Calu3 (cell line): ENCODE measurements at regions of chr1 and their contacts with region 1.

Region 1: DNA sequence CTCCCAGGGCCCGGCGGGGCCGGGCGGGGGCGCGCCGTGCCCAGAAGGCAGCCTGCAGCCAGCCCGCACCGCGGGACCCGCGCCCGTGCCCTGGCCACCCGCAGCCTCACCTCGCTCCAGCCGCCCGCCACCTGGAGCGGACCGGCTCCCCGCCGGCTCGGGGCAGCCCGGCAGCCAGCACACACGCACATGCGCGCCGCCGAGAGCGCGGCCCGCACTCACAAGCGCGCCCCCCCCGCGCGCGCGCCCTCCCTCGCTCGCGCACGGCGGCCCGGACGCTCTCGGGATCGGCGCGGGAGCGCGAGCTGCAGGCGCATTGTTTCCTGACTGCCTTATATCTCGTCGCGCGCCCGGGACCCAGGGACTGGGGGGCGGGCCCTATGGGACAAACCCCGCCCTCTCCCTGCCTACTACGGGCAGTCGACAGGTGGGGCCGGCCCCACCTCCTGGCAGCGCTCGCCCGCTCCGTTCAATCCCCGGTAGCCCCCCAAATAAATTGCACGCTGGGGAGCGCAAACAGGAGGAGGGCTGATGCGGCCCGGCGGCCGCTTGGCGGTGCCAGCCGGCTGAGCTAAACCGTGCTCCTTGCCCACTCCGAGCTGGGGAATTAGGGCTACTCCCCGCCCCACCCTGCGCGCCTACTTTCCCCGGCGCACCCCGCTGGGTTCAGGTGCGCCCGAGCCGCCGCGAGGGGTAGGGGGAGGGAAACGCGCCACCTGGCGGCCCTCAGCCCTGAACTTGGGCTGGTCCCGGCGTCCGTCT is at the start of gene MYCL:
- DNase-seq: peak; percentile 94
- H3K4me3 Mint-ChIP-seq: peak within 1 kb of the TSS; percentile 86
- H3K27ac Mint-ChIP-seq: no peak within 1 kb of the TSS
- H3K4me1 Mint-ChIP-seq: peaks cover 12% of the 10 kb centered on the region
- H3K27me3 Mint-ChIP-seq: peaks cover 56% of the 10 kb centered on the region
- CTCF ChIP-seq: peak; percentile 69
- total RNA-seq, gene MYCL: 0.59 and 0.78 TPM in 2 replicates

Region 2: GRCh38 chr1:39845275-39846116 is 56.4 kb before region 1 on chr1:
- CTCF ChIA-PET with region 1: interaction called, 10 read pairs
- intact Hi-C with region 1: loop called (anchors 5 kb)
- DNase-seq: peak; percentile 89
- H3K4me3 Mint-ChIP-seq: peak overlapping the region; percentile 9
- H3K27ac Mint-ChIP-seq: peak overlapping the region; percentile 69
- H3K4me1 Mint-ChIP-seq: peaks cover 15% of the 10 kb centered on the region
- H3K27me3 Mint-ChIP-seq: no peaks in the 10 kb centered on the region
- CTCF ChIP-seq: no peak